CD14-positive monocyte (primary cell): ENCODE measurements at regions of chr4 and their contacts with region 1.

Region 1: GRCh38 chr4:56435306-56435926 is at the start of gene PPAT:
- DNase-seq: peak; percentile 94 to 97 (median 95)
- H3K4me3 ChIP-seq: peak within 1 kb of the TSS; percentile 69 to 91 (median 72)
- H3K4me3 Mint-ChIP-seq: peak within 1 kb of the TSS; percentile 86 to 99
- H3K27ac ChIP-seq: peak within 1 kb of the TSS; percentile 86 to 87
- H3K27ac Mint-ChIP-seq: peak within 1 kb of the TSS; percentile 94 to 99 (median 97)
- H3K4me1 ChIP-seq: peaks cover 19 to 36% of the 10 kb centered on the region in 2 donors
- H3K4me1 Mint-ChIP-seq: peaks cover 28% of the 10 kb centered on the region
- H3K27me3 ChIP-seq: no peaks in the 10 kb centered on the region
- H3K27me3 Mint-ChIP-seq: peaks cover 0 to 2% (median 0%) of the 10 kb centered on the region in 3 donors
- CTCF ChIP-seq: peak; percentile 7
- polyA plus RNA-seq, gene PPAT: 0.83 to 1.5 (median 1.4) TPM

Region 2: DNA sequence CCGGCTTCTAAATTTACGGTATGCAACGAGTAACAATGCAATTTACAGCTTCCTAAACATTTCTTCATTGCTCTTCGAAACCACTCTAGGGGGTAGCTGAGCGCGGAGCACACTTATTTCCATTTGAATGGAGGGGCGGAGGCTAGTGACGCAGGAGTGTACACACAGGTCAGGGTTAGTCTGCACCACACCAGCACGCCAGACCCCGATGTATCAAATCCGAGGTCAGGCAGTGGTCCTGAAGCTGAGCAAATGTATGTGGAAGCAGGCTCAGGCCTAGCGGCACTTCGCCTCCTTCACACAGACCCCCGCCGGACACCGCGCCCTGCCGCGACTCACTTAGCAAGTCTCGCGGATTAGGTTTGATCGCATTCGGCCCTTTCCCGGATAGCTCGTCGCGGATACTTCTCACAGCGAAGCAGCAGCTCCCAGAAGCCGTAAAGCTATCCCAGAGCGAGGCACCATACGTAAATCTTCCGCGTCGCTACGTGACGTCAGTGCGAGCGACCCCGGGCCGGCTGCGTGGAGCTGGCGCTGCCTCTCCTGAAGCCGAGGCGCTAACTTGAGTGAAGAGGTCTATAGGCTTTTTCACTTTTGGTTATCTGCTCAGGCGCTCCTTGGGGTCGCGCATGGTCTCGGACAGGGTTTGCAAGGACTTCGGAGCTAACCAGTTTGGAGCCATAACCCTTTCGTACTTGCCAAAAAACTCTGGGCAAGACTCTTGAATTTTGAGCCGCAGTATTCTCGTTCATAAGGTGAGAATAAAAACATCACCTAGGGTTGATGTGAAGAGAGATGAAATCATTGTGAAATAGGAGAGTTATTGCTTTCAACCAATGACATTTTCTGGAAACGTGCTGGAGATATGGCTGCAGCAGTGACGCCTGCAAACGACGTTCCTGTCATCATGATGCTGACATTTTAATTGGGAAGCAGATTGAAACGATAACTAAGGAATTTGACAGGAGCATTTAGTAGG is 48.1 kb before region 1 on chr4 and contains the start of gene AASDH:
- intact Hi-C with region 1: loop called (anchors 2 to 5 kb)
- DNase-seq: peak; percentile 90 to 93 (median 91)
- H3K4me3 ChIP-seq: peak within 1 kb of the TSS; percentile 70 to 86 (median 73)
- H3K4me3 Mint-ChIP-seq: peak within 1 kb of the TSS; percentile 86 to 96
- H3K27ac ChIP-seq: peak within 1 kb of the TSS; percentile 95 to 96
- H3K27ac Mint-ChIP-seq: peak within 1 kb of the TSS; percentile 98 to 99 (median 99)
- H3K4me1 ChIP-seq: peaks cover 15 to 23% of the 10 kb centered on the region in 2 donors
- H3K4me1 Mint-ChIP-seq: peaks cover 19% of the 10 kb centered on the region
- H3K27me3 ChIP-seq: no peaks in the 10 kb centered on the region
- H3K27me3 Mint-ChIP-seq: no peaks in the 10 kb centered on the region
- CTCF ChIP-seq: no peak
- polyA plus RNA-seq, gene AASDH: 5.9 to 6.9 (median 6.2) TPM

Region 3: GRCh38 chr4:56467284-56468096 is 32.1 kb after region 1 on chr4 and contains the start of gene SRP72:
- intact Hi-C with region 1: loop called in 1 of 2 experiments (anchors 5 kb)
- DNase-seq: peak; percentile 77 to 80 (median 79)
- H3K4me3 ChIP-seq: peak within 1 kb of the TSS; percentile 90 to 98 (median 92)
- H3K4me3 Mint-ChIP-seq: peak within 1 kb of the TSS; percentile 98 to 99
- H3K27ac ChIP-seq: peak within 1 kb of the TSS; percentile 76 to 91
- H3K27ac Mint-ChIP-seq: peak within 1 kb of the TSS; percentile 92 to 98 (median 96)
- H3K4me1 ChIP-seq: peaks cover 28 to 44% of the 10 kb centered on the region in 2 donors
- H3K4me1 Mint-ChIP-seq: peaks cover 45% of the 10 kb centered on the region
- H3K27me3 ChIP-seq: no peaks in the 10 kb centered on the region
- H3K27me3 Mint-ChIP-seq: no peaks in the 10 kb centered on the region
- CTCF ChIP-seq: no peak
- polyA plus RNA-seq, gene SRP72: 54.4 to 140 (median 103) TPM

Region 4: GRCh38 chr4:56783986-56784385 is 348.6 kb after region 1 on chr4:
- intact Hi-C with region 1: no loop called
- DNase-seq: no peak
- H3K4me3 ChIP-seq: no peak overlapping the region
- H3K4me3 Mint-ChIP-seq: no peak overlapping the region
- H3K27ac ChIP-seq: no peak overlapping the region
- H3K27ac Mint-ChIP-seq: no peak overlapping the region
- H3K4me1 ChIP-seq: peaks cover 0 to 3% of the 10 kb centered on the region in 2 donors
- H3K4me1 Mint-ChIP-seq: peaks cover 7% of the 10 kb centered on the region
- H3K27me3 ChIP-seq: no peaks in the 10 kb centered on the region
- H3K27me3 Mint-ChIP-seq: peaks cover 0 to 4% (median 3%) of the 10 kb centered on the region in 3 donors
- CTCF ChIP-seq: no peak

Region 5: GRCh38 chr4:56907489-56908205 is 472.2 kb after region 1 on chr4 and contains the start of gene REST:
- intact Hi-C with region 1: loop called in 1 of 2 experiments (anchors 10 kb)
- DNase-seq: peak; percentile 59 to 74 (median 62)
- H3K4me3 ChIP-seq: peak within 1 kb of the TSS; percentile 58 to 95 (median 94)
- H3K4me3 Mint-ChIP-seq: peak within 1 kb of the TSS; percentile 98 to 99
- H3K27ac ChIP-seq: peak within 1 kb of the TSS in 1 of 2 donors; percentile 94
- H3K27ac Mint-ChIP-seq: peak within 1 kb of the TSS; percentile 80 to 94 (median 84)
- H3K4me1 ChIP-seq: peaks cover 30 to 37% of the 10 kb centered on the region in 2 donors
- H3K4me1 Mint-ChIP-seq: peaks cover 41% of the 10 kb centered on the region
- H3K27me3 ChIP-seq: no peaks in the 10 kb centered on the region
- H3K27me3 Mint-ChIP-seq: no peaks in the 10 kb centered on the region
- CTCF ChIP-seq: no peak
- polyA plus RNA-seq, gene REST: 6.3 to 71.2 (median 44.2) TPM

Region 6: DNA sequence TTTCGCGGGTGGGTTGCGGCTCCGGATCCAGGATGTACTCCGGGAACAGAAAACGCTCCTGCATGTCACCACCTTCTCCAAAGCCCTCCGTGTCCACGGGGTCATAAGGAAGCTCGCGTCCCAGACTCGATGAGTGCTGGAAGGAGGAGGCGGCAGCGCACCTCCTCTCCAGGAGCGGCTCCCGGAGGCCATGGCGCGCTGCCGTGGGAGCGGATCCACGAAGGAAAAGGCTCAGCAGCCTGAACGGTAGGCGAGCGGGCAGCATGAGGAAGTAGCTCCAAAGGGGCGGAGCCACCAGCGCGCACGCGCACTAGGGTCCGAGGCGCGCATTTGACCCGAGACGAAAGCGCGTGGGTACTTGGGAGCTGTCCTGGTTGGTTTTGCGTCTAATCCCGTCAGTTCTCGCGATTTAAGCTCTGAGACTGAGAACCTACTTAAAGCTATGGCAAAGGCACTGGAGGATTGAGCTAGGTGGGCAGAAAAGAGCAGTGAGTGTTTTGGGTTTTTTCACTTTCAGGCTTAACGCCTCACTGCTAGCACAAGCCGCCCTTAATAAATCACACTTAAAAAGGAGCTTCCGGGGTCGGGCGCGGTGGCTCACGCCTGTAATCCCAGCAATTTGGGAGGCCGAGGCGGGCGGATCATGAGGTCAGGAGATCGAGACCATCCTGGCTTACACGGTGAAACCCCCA is 542.1 kb after region 1 on chr4 and contains the start of gene NOA1:
- intact Hi-C with region 1: loop called in 1 of 2 experiments (anchors 5 kb)
- DNase-seq: peak; percentile 99
- H3K4me3 ChIP-seq: peak within 1 kb of the TSS; percentile 86 to 99 (median 87)
- H3K4me3 Mint-ChIP-seq: peak within 1 kb of the TSS; percentile 100
- H3K27ac ChIP-seq: peak within 1 kb of the TSS; percentile 91 to 95
- H3K27ac Mint-ChIP-seq: peak within 1 kb of the TSS; percentile 92 to 99 (median 98)
- H3K4me1 ChIP-seq: peaks cover 34 to 43% of the 10 kb centered on the region in 2 donors
- H3K4me1 Mint-ChIP-seq: peaks cover 39% of the 10 kb centered on the region
- H3K27me3 ChIP-seq: no peaks in the 10 kb centered on the region
- H3K27me3 Mint-ChIP-seq: no peaks in the 10 kb centered on the region
- CTCF ChIP-seq: no peak
- polyA plus RNA-seq, gene NOA1: 10.4 to 12.6 (median 11.5) TPM